Naive thymus-derived CD4-positive, alpha-beta T cell (primary cell): ENCODE measurements at regions of chr19 and their contacts with region 1.

Region 1: DNA sequence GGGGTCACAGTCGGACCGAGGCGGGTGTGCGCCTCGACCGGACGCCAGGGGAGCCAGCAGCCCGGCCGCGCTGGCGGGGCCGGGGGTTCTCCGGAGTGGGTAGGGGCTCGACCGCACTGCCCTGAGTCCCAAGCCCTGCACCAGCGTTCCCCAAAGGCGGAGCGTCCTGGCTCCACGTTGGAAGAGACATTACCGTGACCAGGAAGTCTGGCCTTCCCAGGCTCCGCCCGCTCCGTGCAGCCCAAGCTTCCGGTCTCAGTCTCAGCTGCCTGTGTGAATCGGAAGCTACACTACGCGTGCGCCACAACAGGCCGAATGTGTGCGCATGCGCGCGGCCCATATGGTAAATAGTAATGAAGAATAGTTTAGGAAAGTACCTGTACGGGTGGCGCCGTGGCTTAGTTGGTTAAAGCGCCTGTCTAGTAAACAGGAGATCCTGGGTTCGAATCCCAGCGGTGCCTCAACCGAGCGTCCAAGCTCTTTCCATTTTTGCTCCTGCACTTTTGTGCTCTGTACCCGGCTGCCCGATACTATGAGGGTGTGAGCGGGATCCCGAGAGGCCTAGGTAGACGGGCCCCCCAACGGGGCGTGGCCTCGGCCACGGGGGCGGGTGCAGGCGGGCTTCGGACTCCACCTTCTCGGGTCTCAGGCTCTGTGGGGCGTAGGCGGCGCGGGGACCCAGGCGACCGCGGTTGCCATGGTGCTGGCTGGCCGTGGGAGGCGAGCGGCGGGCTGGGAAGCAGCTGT is 17.3 kb upstream of the LRP3 start:
- DNase-seq: peak; percentile 91 to 100 (median 99)
- ATAC-seq: peak; percentile 81
- H3K4me3 ChIP-seq: peak overlapping the region; percentile 98
- H3K4me3 Mint-ChIP-seq: peak overlapping the region; percentile 92 to 99 (median 97)
- H3K27ac ChIP-seq: peak overlapping the region; percentile 89
- H3K27ac Mint-ChIP-seq: peak overlapping the region; percentile 96 to 100 (median 100)
- H3K4me1 ChIP-seq: peaks cover 13 to 18% of the 10 kb centered on the region in 2 donors
- H3K4me1 Mint-ChIP-seq: peaks cover 29 to 58% (median 50%) of the 10 kb centered on the region in 7 donors
- H3K27me3 ChIP-seq: no peaks in the 10 kb centered on the region
- H3K27me3 Mint-ChIP-seq: peaks cover 0 to 13% (median 0%) of the 10 kb centered on the region in 5 donors

Region 2: DNA sequence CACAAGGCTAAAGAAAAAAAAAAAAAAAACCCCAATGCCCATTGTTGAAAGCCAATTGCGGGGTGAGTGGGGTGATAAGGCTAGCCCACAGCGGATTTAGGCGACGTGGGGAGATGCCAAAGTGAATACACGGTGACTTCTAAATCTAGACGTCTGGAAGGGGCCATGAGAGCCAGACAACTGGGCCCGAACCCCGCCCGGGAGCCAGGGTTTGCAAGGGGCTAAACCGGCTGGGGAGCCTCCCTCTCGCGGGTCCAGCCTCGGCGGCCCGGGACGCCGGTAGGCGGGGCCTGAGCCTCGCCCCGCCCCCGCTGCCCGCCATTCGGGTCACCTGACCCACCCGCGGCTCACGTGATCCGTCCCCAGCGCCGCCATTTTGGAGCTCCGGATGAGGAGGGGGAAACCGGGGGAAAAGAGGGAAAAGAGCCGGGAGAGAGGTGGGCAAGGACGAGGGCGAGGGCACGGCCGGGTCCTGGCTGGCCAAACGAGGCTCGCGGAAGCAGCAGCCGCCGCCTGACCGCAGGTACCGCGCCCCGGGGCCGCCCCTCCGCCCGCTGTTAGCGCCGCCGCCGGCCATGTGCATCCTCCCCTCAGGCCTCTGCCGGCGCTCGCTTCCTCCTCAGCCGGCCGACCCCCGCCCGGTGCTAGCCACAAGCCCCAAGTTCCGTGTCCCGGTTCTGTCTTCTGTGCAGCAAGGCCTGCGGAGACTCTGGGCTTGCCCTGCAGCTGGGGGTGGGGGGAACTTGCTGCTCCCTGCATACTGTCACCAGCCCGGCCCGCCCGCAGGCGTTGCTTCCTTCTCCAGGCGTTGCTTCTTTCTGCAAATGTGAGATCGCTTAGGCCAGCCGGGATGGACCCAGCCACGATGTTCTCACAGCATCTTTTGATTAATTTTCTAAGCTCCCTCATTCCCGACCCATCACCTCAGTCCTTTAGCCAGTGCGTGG is 831.3 kb before region 1 on chr19 and contains the start of gene ZNF507:
- CTCF ChIA-PET with region 1: no interaction called
- POLR2A ChIA-PET with region 1: interaction called, 4 read pairs
- intact Hi-C with region 1: loop called (anchors 2 to 5 kb)
- DNase-seq: peak; percentile 69 to 90 (median 77)
- ATAC-seq: peak; percentile 93
- H3K4me3 ChIP-seq: peak within 1 kb of the TSS; percentile 71
- H3K4me3 Mint-ChIP-seq: peak within 1 kb of the TSS; percentile 95 to 99 (median 97)
- H3K27ac ChIP-seq: peak within 1 kb of the TSS; percentile 89
- H3K27ac Mint-ChIP-seq: peak within 1 kb of the TSS; percentile 88 to 99 (median 95)
- H3K4me1 ChIP-seq: peaks cover 27 to 30% of the 10 kb centered on the region in 2 donors
- H3K4me1 Mint-ChIP-seq: peaks cover 30 to 47% (median 43%) of the 10 kb centered on the region in 7 donors
- H3K27me3 ChIP-seq: no peaks in the 10 kb centered on the region
- H3K27me3 Mint-ChIP-seq: peaks cover 0 to 18% (median 5%) of the 10 kb centered on the region in 5 donors
- total RNA-seq, gene ZNF507: 21.6 to 46.3 (median 36.4) TPM

Region 3: DNA sequence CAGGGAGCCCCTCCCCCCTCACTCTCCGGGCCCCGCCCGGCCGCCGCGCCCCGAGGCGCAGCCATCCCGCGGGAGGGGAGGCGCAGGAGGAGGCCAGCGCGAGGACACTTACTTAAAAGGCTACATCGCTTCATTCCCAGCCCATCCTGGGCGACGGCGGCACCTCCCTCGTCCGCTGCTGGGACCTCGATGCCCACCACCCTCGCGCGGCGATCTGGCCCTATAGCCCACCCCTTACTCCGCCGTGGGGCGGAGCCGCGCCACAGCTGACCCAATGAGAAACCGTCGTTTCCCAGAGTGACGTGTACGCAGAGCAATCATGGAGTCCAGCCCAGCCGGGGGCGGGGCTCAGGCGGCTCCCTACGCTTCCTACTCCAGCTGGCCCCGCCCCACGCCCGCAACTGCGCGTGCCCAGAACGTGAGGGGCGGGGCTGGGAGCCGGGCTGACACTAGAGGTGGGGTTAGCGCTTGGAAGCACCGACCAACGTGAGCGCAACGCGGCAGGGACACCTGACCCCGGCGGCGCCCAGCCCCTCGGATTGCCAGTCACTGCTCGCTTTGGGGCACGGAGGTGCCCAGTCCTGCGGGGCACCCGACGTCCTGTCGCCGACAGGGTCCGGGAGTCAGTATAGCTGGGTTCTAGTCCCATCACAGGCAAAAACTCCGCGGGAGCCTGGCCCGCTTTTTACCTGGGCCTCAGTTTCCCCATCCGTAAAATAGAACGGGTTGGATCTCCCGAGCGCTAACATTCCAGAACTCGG is 501.7 kb before region 1 on chr19 and contains the start of gene ANKRD27:
- CTCF ChIA-PET with region 1: no interaction called
- POLR2A ChIA-PET with region 1: interaction called, 9 read pairs
- intact Hi-C with region 1: loop called (anchors 1 to 5 kb)
- DNase-seq: peak; percentile 96 to 100 (median 98)
- ATAC-seq: peak; percentile 96
- H3K4me3 ChIP-seq: peak within 1 kb of the TSS; percentile 97
- H3K4me3 Mint-ChIP-seq: peak within 1 kb of the TSS; percentile 90 to 98 (median 96)
- H3K27ac ChIP-seq: peak within 1 kb of the TSS; percentile 67
- H3K27ac Mint-ChIP-seq: peak within 1 kb of the TSS; percentile 70 to 90 (median 83)
- H3K4me1 ChIP-seq: peaks cover 10 to 14% of the 10 kb centered on the region in 2 donors
- H3K4me1 Mint-ChIP-seq: peaks cover 25 to 44% (median 36%) of the 10 kb centered on the region in 7 donors
- H3K27me3 ChIP-seq: no peaks in the 10 kb centered on the region
- H3K27me3 Mint-ChIP-seq: peaks cover 6 to 35% (median 8%) of the 10 kb centered on the region in 5 donors
- total RNA-seq, gene ANKRD27: 23.6 to 44.9 (median 41.2) TPM

Region 4: DNA sequence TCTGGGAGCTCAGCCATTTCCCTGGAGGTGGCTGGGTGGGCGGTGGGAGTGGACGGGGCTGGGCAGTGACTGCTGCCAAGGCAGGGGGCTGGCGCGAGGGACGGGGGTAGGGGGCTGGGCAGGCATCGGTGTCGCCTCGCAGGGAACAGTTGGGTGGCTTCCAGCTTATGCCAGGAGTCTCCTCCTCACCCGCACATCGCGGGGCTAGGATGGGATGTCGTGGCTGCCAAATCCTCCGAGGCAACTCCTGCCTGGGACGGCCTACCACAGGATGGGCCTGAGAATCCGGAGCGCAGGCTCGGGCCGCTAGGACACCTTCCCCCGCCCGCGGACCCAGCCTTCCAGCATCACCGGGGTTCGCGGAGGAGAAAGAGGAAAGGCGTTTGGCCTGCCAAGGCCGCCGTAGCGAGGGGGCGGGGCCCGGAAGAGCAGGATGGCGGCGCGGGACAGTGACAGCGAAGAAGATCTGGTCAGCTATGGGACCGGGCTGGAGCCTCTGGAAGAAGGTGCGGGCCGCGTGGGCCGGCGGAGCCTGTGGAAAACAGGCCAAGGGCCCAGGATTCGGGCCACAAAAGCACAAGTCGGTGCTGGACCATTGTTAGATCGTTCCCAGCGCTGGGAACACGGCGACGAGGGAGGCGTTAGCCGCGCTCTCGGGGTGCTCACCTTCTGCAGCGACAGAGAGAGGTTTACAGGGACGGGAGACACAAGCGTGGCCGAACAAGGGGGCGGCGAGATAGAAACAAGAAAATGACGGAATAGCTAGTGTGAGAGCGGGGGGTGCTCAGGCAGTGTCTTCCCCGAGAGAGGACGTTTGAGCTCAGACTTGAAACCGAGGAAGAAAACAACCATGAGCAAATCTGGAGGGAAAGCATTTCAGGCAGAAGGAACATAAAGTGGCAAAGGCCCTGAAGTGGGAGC is 95.8 kb before region 1 on chr19 and contains the start of gene GPATCH1:
- CTCF ChIA-PET with region 1: no interaction called
- POLR2A ChIA-PET with region 1: interaction called, 8 read pairs
- intact Hi-C with region 1: loop called (anchors 1 to 2 kb)
- DNase-seq: peak; percentile 79 to 92 (median 85)
- ATAC-seq: peak; percentile 99
- H3K4me3 ChIP-seq: peak within 1 kb of the TSS; percentile 98
- H3K4me3 Mint-ChIP-seq: peak within 1 kb of the TSS; percentile 92 to 99 (median 94)
- H3K27ac ChIP-seq: peak within 1 kb of the TSS; percentile 84
- H3K27ac Mint-ChIP-seq: peak within 1 kb of the TSS; percentile 89 to 99 (median 94)
- H3K4me1 ChIP-seq: peaks cover 10 to 11% of the 10 kb centered on the region in 2 donors
- H3K4me1 Mint-ChIP-seq: peaks cover 20 to 39% (median 30%) of the 10 kb centered on the region in 7 donors
- H3K27me3 ChIP-seq: no peaks in the 10 kb centered on the region
- H3K27me3 Mint-ChIP-seq: no peaks in the 10 kb centered on the region
- total RNA-seq, gene GPATCH1: 11.2 to 20.0 (median 14.4) TPM

Region 5: GRCh38 chr19:33161201-33161600 is 15.6 kb before region 1 on chr19:
- CTCF ChIA-PET with region 1: interaction called, 15 read pairs
- POLR2A ChIA-PET with region 1: interaction called, 75 read pairs
- intact Hi-C with region 1: loop called (anchors 1 kb)
- DNase-seq: no peak
- ATAC-seq: no peak
- H3K4me3 ChIP-seq: no peak overlapping the region
- H3K4me3 Mint-ChIP-seq: peak overlapping the region in 7 of 10 donors; percentile 13 to 74 (median 63)
- H3K27ac ChIP-seq: no peak overlapping the region
- H3K27ac Mint-ChIP-seq: peak overlapping the region in 8 of 9 donors; percentile 43 to 95 (median 88)
- H3K4me1 ChIP-seq: peaks cover 26% of the 10 kb centered on the region in 2 donors
- H3K4me1 Mint-ChIP-seq: peaks cover 31 to 44% (median 40%) of the 10 kb centered on the region in 7 donors
- H3K27me3 ChIP-seq: no peaks in the 10 kb centered on the region
- H3K27me3 Mint-ChIP-seq: no peaks in the 10 kb centered on the region

Region 6: DNA sequence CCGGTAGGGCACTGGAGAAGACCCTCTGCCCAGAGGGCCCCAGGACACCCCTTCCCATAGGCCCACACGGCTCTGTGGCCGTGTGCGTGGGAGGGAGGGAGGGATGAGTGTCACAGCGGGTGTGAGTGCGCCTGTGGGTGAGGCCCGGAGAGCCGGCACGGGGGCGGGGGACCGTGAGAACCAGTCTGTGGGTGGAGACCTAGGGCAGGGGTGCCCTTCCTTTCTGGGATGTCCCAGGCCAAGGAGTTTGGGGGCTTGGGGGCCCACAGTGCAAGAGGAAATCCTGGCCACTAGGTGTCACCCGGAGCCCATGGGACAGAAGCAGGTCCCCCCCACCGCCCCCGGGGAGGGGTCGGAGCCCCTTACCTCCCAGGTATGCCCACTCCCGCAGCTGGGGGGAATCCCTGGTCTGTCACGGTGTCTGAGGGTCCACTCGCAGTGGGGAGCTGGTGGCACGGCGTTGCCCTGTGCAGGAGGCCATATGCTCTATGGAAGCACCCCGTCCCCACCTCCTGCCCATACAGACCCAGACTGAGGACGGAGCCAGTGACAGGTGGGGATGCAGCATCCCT is 64.8 kb after region 1 on chr19:
- CTCF ChIA-PET with region 1: no interaction called
- POLR2A ChIA-PET with region 1: no interaction called
- intact Hi-C with region 1: no loop called
- DNase-seq: no peak
- ATAC-seq: peak; percentile 68
- H3K4me3 ChIP-seq: no peak overlapping the region
- H3K4me3 Mint-ChIP-seq: no peak overlapping the region
- H3K27ac ChIP-seq: no peak overlapping the region
- H3K27ac Mint-ChIP-seq: no peak overlapping the region
- H3K4me1 ChIP-seq: peaks cover 0 to 20% of the 10 kb centered on the region in 2 donors
- H3K4me1 Mint-ChIP-seq: peaks cover 0 to 2% (median 0%) of the 10 kb centered on the region in 7 donors
- H3K27me3 ChIP-seq: no peaks in the 10 kb centered on the region
- H3K27me3 Mint-ChIP-seq: peaks cover 0 to 10% (median 0%) of the 10 kb centered on the region in 5 donors

Region 7: GRCh38 chr19:33280351-33280921 is 103.6 kb after region 1 on chr19:
- CTCF ChIA-PET with region 1: no interaction called
- POLR2A ChIA-PET with region 1: no interaction called
- intact Hi-C with region 1: no loop called
- DNase-seq: peak in 1 of 9 donors; percentile 50
- ATAC-seq: peak; percentile 18
- H3K4me3 ChIP-seq: no peak overlapping the region
- H3K4me3 Mint-ChIP-seq: peak overlapping the region in 1 of 10 donors; percentile 18
- H3K27ac ChIP-seq: no peak overlapping the region
- H3K27ac Mint-ChIP-seq: peak overlapping the region in 3 of 9 donors; percentile 4 to 38 (median 9)
- H3K4me1 ChIP-seq: no peaks in the 10 kb centered on the region
- H3K4me1 Mint-ChIP-seq: peaks cover 0 to 11% (median 6%) of the 10 kb centered on the region in 7 donors
- H3K27me3 ChIP-seq: no peaks in the 10 kb centered on the region
- H3K27me3 Mint-ChIP-seq: peaks cover 0 to 5% (median 0%) of the 10 kb centered on the region in 5 donors

Region 8: GRCh38 chr19:33343859-33344572 is 167.2 kb after region 1 on chr19:
- CTCF ChIA-PET with region 1: no interaction called
- POLR2A ChIA-PET with region 1: no interaction called
- intact Hi-C with region 1: no loop called
- DNase-seq: no peak
- ATAC-seq: no peak
- H3K4me3 ChIP-seq: no peak overlapping the region
- H3K4me3 Mint-ChIP-seq: no peak overlapping the region
- H3K27ac ChIP-seq: no peak overlapping the region
- H3K27ac Mint-ChIP-seq: no peak overlapping the region
- H3K4me1 ChIP-seq: no peaks in the 10 kb centered on the region
- H3K4me1 Mint-ChIP-seq: peaks cover 0 to 2% (median 0%) of the 10 kb centered on the region in 7 donors
- H3K27me3 ChIP-seq: peaks cover 0 to 2% of the 10 kb centered on the region in 2 donors
- H3K27me3 Mint-ChIP-seq: peaks cover 40 to 76% (median 68%) of the 10 kb centered on the region in 5 donors

Region 9: DNA sequence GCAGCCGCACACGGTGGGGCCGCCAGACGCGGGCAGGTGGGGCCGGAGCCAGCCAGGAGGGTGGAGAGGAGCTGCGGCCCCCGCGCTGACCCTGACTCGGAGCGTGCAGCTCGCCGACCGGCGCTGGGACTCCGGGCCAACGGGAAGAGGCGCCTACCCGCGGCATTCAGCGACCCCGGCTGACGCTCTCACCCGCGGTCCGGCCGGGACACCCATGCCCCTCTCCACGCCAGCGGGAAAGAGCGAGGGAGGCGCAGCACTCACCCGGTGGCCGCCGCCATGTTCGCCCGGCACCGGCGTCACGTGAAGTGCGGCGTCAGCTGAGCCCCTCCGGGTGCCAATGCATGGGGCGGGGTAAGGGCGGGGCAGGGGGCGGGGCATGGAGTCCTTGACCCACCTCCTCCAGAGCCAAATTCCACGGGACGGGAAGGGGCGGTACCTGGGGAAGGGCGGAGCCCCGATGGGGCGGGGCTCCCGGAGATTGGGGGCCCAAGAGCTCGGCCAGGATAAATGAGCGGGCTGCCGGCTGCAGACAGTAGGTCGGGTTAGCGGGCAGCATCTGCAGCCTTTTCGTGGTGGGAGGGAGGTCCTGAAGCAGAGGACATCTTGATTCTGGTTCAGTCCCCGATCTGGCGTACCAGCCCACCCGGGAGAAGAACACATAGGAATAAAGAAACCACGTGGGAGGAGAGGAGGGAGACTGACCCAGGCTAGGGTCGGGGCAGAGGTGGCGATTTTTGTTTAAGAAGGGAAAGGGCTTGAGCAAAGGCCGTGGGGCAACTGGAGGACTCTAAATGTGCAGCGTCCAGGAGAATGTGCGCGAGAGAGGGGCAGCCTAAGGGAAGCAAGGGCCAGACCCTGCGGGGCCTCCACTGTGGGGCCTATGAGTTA is 344.9 kb after region 1 on chr19 and contains the start of gene PEPD:
- CTCF ChIA-PET with region 1: no interaction called
- POLR2A ChIA-PET with region 1: interaction called, 6 read pairs
- intact Hi-C with region 1: loop called in 1 of 2 experiments (anchors 2 kb)
- DNase-seq: peak; percentile 53 to 82 (median 62)
- ATAC-seq: peak; percentile 95
- H3K4me3 ChIP-seq: peak within 1 kb of the TSS; percentile 82
- H3K4me3 Mint-ChIP-seq: peak within 1 kb of the TSS; percentile 75 to 91 (median 88)
- H3K27ac ChIP-seq: peak within 1 kb of the TSS; percentile 65
- H3K27ac Mint-ChIP-seq: peak within 1 kb of the TSS; percentile 69 to 95 (median 83)
- H3K4me1 ChIP-seq: peaks cover 13 to 14% of the 10 kb centered on the region in 2 donors
- H3K4me1 Mint-ChIP-seq: peaks cover 17 to 29% (median 25%) of the 10 kb centered on the region in 7 donors
- H3K27me3 ChIP-seq: no peaks in the 10 kb centered on the region
- H3K27me3 Mint-ChIP-seq: peaks cover 0 to 10% (median 0%) of the 10 kb centered on the region in 5 donors
- total RNA-seq, gene PEPD: 21.9 to 35.6 (median 24.5) TPM

Region 10: DNA sequence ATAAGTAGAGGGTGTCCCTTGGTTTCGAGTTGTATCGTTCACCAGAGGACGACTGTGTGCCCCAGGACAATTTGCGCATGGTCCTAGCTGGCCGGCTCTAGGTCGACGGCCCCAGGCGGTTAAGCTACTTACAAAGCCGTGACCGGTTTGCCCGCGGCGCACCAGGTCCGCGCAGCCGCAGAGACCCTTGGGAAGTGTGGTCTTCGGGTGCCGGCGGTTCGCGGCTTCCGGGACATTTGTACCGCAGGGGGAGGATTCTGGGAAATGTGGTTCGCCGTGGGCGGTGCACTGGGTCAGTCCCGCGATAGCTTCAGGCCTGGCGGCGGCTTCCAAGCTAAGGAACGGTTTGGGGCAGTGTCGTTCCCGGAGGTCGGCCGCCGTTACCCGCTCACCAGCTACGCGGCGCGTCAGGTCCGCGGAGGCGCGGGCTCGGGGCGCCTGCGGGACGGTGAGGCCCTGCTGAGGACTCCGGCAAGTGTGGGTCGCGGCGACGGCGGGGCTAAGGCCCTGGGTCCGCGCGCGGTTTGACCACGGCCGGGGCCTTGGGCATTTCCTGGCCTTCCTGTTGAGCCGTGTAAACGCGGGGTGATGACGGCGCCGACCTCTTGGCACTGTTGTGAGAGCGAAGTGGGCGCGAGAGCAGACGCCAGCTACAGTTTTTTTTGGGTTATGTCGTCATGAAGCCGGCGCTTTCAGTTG is 1500.7 kb after region 1 on chr19 and contains the start of gene ZNF302:
- CTCF ChIA-PET with region 1: no interaction called
- POLR2A ChIA-PET with region 1: no interaction called
- intact Hi-C with region 1: loop called in 1 of 2 experiments (anchors 5 kb)
- DNase-seq: peak; percentile 87 to 96 (median 94)
- ATAC-seq: peak; percentile 95
- H3K4me3 ChIP-seq: peak within 1 kb of the TSS; percentile 93
- H3K4me3 Mint-ChIP-seq: peak within 1 kb of the TSS; percentile 92 to 99 (median 96)
- H3K27ac ChIP-seq: peak within 1 kb of the TSS; percentile 80
- H3K27ac Mint-ChIP-seq: peak within 1 kb of the TSS; percentile 94 to 100 (median 99)
- H3K4me1 ChIP-seq: peaks cover 14 to 15% of the 10 kb centered on the region in 2 donors
- H3K4me1 Mint-ChIP-seq: peaks cover 20 to 56% (median 35%) of the 10 kb centered on the region in 7 donors
- H3K27me3 ChIP-seq: no peaks in the 10 kb centered on the region
- H3K27me3 Mint-ChIP-seq: peaks cover 9 to 18% (median 12%) of the 10 kb centered on the region in 5 donors
- total RNA-seq, gene ZNF302: 13.6 to 61.4 (median 25.7) TPM